GM23248 (cell line): ENCODE measurements at regions of chrX and their contacts with region 1.

Region 1: DNA sequence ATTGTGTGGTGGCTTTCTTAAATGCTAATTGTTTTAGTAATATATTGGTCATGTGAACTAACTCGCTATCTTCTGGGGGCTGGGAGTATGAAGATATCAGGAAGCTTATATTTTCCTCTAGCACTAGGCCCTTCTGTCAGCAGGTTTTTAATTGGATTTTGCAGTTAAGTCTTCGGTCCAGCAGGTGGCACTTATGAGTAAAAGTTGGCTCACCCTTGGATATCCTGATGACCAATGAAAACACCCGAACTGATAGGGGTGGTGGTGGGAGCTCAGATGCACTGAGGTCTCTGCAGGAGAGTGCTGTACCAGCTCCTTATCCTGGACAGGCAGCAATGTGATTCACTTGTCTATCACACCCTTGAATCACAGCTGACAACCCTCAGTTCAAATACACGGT is 1365.8 kb upstream of the DIAPH2 start:
- DNase-seq: peak; percentile 2
- H3K4me3 ChIP-seq: no peak overlapping the region
- H3K27ac ChIP-seq: no peak overlapping the region
- H3K4me1 ChIP-seq: no peaks in the 10 kb centered on the region
- H3K27me3 ChIP-seq: no peaks in the 10 kb centered on the region

Region 2: DNA sequence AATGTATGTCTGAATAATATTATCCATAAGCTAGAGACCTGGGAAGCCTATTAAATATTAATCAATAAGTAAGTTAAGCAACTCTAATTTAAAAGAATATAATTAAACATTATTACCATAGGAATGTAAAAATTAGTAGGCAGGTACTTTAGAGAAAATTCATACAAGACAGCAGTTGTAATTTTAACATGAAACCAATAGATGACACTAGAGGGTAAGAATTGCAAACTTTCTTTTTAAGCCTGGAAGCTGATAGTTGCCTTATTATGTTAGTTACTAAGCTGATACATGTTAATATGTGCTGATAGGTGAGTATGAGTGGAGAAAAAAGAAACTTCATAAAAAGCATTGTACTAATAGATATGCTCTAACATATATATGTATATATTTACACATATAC is 487.5 kb before region 1 on chrX:
- in situ Hi-C with region 1: loop called (anchors 25 kb)
- DNase-seq: peak; percentile 18
- H3K4me3 ChIP-seq: no peak overlapping the region
- H3K27ac ChIP-seq: no peak overlapping the region
- H3K4me1 ChIP-seq: no peaks in the 10 kb centered on the region
- H3K27me3 ChIP-seq: no peaks in the 10 kb centered on the region

Region 3: GRCh38 chrX:95585321-95585720 is 266.4 kb after region 1 on chrX:
- in situ Hi-C with region 1: no loop called
- DNase-seq: no peak
- H3K4me3 ChIP-seq: no peak overlapping the region
- H3K27ac ChIP-seq: no peak overlapping the region
- H3K4me1 ChIP-seq: no peaks in the 10 kb centered on the region
- H3K27me3 ChIP-seq: no peaks in the 10 kb centered on the region

Region 4: GRCh38 chrX:95693365-95693764 is 374.5 kb after region 1 on chrX:
- in situ Hi-C with region 1: no loop called
- DNase-seq: no peak
- H3K4me3 ChIP-seq: no peak overlapping the region
- H3K27ac ChIP-seq: no peak overlapping the region
- H3K4me1 ChIP-seq: no peaks in the 10 kb centered on the region
- H3K27me3 ChIP-seq: no peaks in the 10 kb centered on the region

Region 5: DNA sequence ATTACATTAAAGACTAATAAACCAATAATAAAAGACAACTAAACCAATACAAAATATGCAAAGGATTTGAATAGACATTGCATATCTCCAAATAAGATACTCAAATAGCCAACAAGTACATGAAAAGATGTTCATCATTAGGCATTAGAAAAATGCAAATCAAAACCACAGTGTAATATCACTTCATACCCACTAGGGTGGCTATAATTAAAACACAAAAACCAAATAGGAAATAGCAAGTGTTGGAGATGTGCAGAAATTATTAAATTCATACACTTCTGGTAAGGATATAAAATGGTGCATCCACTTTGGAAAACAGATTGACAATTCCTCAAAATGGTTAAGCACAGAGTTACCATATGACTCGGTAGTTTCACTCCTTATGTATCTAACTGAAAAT is 504.9 kb after region 1 on chrX:
- in situ Hi-C with region 1: no loop called
- DNase-seq: no peak
- H3K4me3 ChIP-seq: no peak overlapping the region
- H3K27ac ChIP-seq: no peak overlapping the region
- H3K4me1 ChIP-seq: no peaks in the 10 kb centered on the region
- H3K27me3 ChIP-seq: no peaks in the 10 kb centered on the region

Region 6: GRCh38 chrX:95841863-95842262 is 523.0 kb after region 1 on chrX:
- in situ Hi-C with region 1: no loop called
- DNase-seq: no peak
- H3K4me3 ChIP-seq: no peak overlapping the region
- H3K27ac ChIP-seq: no peak overlapping the region
- H3K4me1 ChIP-seq: no peaks in the 10 kb centered on the region
- H3K27me3 ChIP-seq: no peaks in the 10 kb centered on the region